ENCODE measurements at regions of chr11 and their contacts with region 1.

Region 1: GRCh38 chr11:61168042-61168688 is 6.9 kb upstream of the VPS37C start:
- DNase-seq: no peak
- H3K4me3 ChIP-seq: no peak overlapping the region
- H3K27ac ChIP-seq: no peak overlapping the region
- H3K4me1 ChIP-seq: peaks cover 14% of the 10 kb centered on the region
- H3K27me3 ChIP-seq: no peaks in the 10 kb centered on the region
- CTCF ChIP-seq: no peak

Region 2: DNA sequence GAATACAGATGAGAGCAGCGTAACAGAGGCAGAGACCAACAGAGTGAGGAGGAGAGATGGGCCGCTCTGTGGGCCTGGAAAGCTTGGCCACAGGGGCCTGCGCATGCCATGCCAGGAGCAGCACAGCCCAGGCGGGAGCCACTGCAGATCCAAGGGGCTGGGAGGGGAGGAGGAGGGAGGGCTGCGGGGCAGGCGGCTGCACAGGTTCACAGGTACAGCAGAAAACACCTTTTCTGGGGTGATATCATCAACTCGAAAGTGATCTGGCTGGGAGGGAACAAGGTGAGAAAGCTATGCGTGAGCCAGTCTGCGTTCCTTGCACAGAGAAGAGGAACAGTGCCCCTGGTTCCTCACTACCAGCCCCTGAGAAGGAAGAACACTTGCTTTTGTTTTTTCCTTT is 21.7 kb before region 1 on chr11:
- CTCF ChIA-PET with region 1: interaction called, 11 read pairs
- POLR2A ChIA-PET with region 1: no interaction called
- intact Hi-C with region 1: no loop called
- DNase-seq: no peak
- H3K4me3 ChIP-seq: no peak overlapping the region
- H3K27ac ChIP-seq: no peak overlapping the region
- H3K4me1 ChIP-seq: peaks cover 33% of the 10 kb centered on the region
- H3K27me3 ChIP-seq: no peaks in the 10 kb centered on the region
- CTCF ChIP-seq: no peak